CD4-positive, alpha-beta T cell (primary cell): ENCODE measurements at regions of chr7 and their contacts with region 1.

Region 1: GRCh38 chr7:122273117-122273516 is 31.4 kb downstream of the FEZF1 start:
- DNase-seq: no peak
- ATAC-seq: no peak
- H3K4me3 ChIP-seq: no peak overlapping the region
- H3K4me3 Mint-ChIP-seq: no peak overlapping the region
- H3K27ac ChIP-seq: no peak overlapping the region
- H3K27ac Mint-ChIP-seq: no peak overlapping the region
- H3K4me1 ChIP-seq: no peaks in the 10 kb centered on the region
- H3K4me1 Mint-ChIP-seq: no peaks in the 10 kb centered on the region
- H3K27me3 ChIP-seq: no peaks in the 10 kb centered on the region
- H3K27me3 Mint-ChIP-seq: no peaks in the 10 kb centered on the region
- CTCF ChIP-seq: no peak

Region 2: GRCh38 chr7:121901026-121901425 is 372.1 kb before region 1 on chr7:
- CTCF ChIA-PET with region 1: no interaction called
- POLR2A ChIA-PET with region 1: no interaction called
- intact Hi-C with region 1: no loop called
- DNase-seq: no peak
- ATAC-seq: no peak
- H3K4me3 ChIP-seq: no peak overlapping the region
- H3K4me3 Mint-ChIP-seq: no peak overlapping the region
- H3K27ac ChIP-seq: no peak overlapping the region
- H3K27ac Mint-ChIP-seq: no peak overlapping the region
- H3K4me1 ChIP-seq: no peaks in the 10 kb centered on the region
- H3K4me1 Mint-ChIP-seq: no peaks in the 10 kb centered on the region
- H3K27me3 ChIP-seq: no peaks in the 10 kb centered on the region
- H3K27me3 Mint-ChIP-seq: no peaks in the 10 kb centered on the region
- CTCF ChIP-seq: no peak

Region 3: DNA sequence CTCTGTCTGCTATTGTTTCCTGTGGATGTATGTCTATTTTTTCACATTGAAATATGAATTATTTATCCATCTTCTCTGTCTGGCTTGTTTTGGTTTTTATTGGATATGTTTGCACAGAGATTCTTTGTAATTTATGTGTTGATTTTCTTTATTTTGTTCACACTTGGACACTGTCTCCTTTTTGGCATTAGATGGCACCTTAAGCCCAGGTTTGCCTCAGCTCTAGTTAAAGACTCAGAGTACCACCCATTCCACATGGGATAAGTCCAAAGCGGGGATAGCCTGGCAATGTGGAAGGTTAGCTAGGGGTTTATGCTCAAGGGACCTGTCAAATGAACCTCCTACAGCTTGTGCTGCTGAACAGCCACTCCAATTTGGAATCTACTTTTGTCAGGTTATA is 17.4 kb after region 1 on chr7:
- CTCF ChIA-PET with region 1: no interaction called
- POLR2A ChIA-PET with region 1: no interaction called
- intact Hi-C with region 1: loop called in 1 of 2 experiments (anchors 1 kb)
- DNase-seq: no peak
- ATAC-seq: no peak
- H3K4me3 ChIP-seq: no peak overlapping the region
- H3K4me3 Mint-ChIP-seq: no peak overlapping the region
- H3K27ac ChIP-seq: no peak overlapping the region
- H3K27ac Mint-ChIP-seq: no peak overlapping the region
- H3K4me1 ChIP-seq: no peaks in the 10 kb centered on the region
- H3K4me1 Mint-ChIP-seq: no peaks in the 10 kb centered on the region
- H3K27me3 ChIP-seq: no peaks in the 10 kb centered on the region
- H3K27me3 Mint-ChIP-seq: peaks cover 4% of the 10 kb centered on the region
- CTCF ChIP-seq: no peak